Caco-2 (cell line): ENCODE measurements at regions of chr10 and their contacts with region 1.

Region 1: GRCh38 chr10:45464958-45465567 is 91.0 kb downstream of the ALOX5 start:
- DNase-seq: peak; percentile 75 to 88
- H3K4me3 ChIP-seq: no peak overlapping the region
- H3K4me3 Mint-ChIP-seq: no peak overlapping the region
- H3K27ac Mint-ChIP-seq: no peak overlapping the region
- H3K4me1 ChIP-seq: 0 out of 2 replicates have a peak, but pooled peaks cover under 1% of the 10 kb centered on the region
- H3K4me1 Mint-ChIP-seq: no peaks in the 10 kb centered on the region
- H3K27me3 ChIP-seq: no peaks in the 10 kb centered on the region
- H3K27me3 Mint-ChIP-seq: peaks cover 3% of the 10 kb centered on the region
- CTCF ChIP-seq: peak; percentile 98 to 99

Region 2: GRCh38 chr10:45008524-45009161 is 456.4 kb before region 1 on chr10:
- CTCF ChIA-PET with region 1: no interaction called
- POLR2A ChIA-PET with region 1: no interaction called
- intact Hi-C with region 1: loop called (anchors 10 kb)
- DNase-seq: peak in 1 of 2 experiments; percentile 83
- H3K4me3 ChIP-seq: no peak overlapping the region
- H3K4me3 Mint-ChIP-seq: no peak overlapping the region
- H3K27ac Mint-ChIP-seq: no peak overlapping the region
- H3K4me1 ChIP-seq: peaks cover 5% of the 10 kb centered on the region; the same call in 1 of the 2 replicates
- H3K4me1 Mint-ChIP-seq: peaks cover 2% of the 10 kb centered on the region
- H3K27me3 ChIP-seq: no peaks in the 10 kb centered on the region
- H3K27me3 Mint-ChIP-seq: no peaks in the 10 kb centered on the region
- CTCF ChIP-seq: peak; percentile 87 to 90

Region 3: GRCh38 chr10:45235798-45236231 is 229.2 kb before region 1 on chr10:
- CTCF ChIA-PET with region 1: interaction called, 3 read pairs
- POLR2A ChIA-PET with region 1: no interaction called
- intact Hi-C with region 1: loop called (anchors 5 kb)
- DNase-seq: no peak
- H3K4me3 ChIP-seq: no peak overlapping the region
- H3K4me3 Mint-ChIP-seq: no peak overlapping the region
- H3K27ac Mint-ChIP-seq: no peak overlapping the region
- H3K4me1 ChIP-seq: no peaks in the 10 kb centered on the region
- H3K4me1 Mint-ChIP-seq: no peaks in the 10 kb centered on the region
- H3K27me3 ChIP-seq: no peaks in the 10 kb centered on the region
- H3K27me3 Mint-ChIP-seq: peaks cover 11% of the 10 kb centered on the region
- CTCF ChIP-seq: no peak

Region 4: GRCh38 chr10:45453639-45454255 is 11.3 kb before region 1 on chr10:
- CTCF ChIA-PET with region 1: interaction called, 11 read pairs
- POLR2A ChIA-PET with region 1: no interaction called
- intact Hi-C with region 1: no loop called
- DNase-seq: no peak
- H3K4me3 ChIP-seq: no peak overlapping the region
- H3K4me3 Mint-ChIP-seq: no peak overlapping the region
- H3K27ac Mint-ChIP-seq: no peak overlapping the region
- H3K4me1 ChIP-seq: no peaks in the 10 kb centered on the region; the same call in 1 of the 2 replicates
- H3K4me1 Mint-ChIP-seq: no peaks in the 10 kb centered on the region
- H3K27me3 ChIP-seq: no peaks in the 10 kb centered on the region
- H3K27me3 Mint-ChIP-seq: no peaks in the 10 kb centered on the region
- CTCF ChIP-seq: no peak

Region 5: GRCh38 chr10:45476559-45476958 is 11.5 kb after region 1 on chr10:
- CTCF ChIA-PET with region 1: no interaction called
- POLR2A ChIA-PET with region 1: no interaction called
- intact Hi-C with region 1: no loop called
- DNase-seq: no peak
- H3K4me3 ChIP-seq: no peak overlapping the region
- H3K4me3 Mint-ChIP-seq: no peak overlapping the region
- H3K27ac Mint-ChIP-seq: no peak overlapping the region
- H3K4me1 ChIP-seq: no peaks in the 10 kb centered on the region
- H3K4me1 Mint-ChIP-seq: no peaks in the 10 kb centered on the region
- H3K27me3 ChIP-seq: no peaks in the 10 kb centered on the region
- H3K27me3 Mint-ChIP-seq: no peaks in the 10 kb centered on the region
- CTCF ChIP-seq: no peak

Region 6: GRCh38 chr10:45594276-45595106 is 129.4 kb after region 1 on chr10:
- CTCF ChIA-PET with region 1: interaction called, 3 read pairs
- POLR2A ChIA-PET with region 1: no interaction called
- intact Hi-C with region 1: loop called (anchors 1 kb)
- DNase-seq: peak; percentile 95 to 97
- H3K4me3 ChIP-seq: peak overlapping the region; percentile 89
- H3K4me3 Mint-ChIP-seq: peak overlapping the region; percentile 73
- H3K27ac Mint-ChIP-seq: peak overlapping the region; percentile 54
- H3K4me1 ChIP-seq: no peaks in the 10 kb centered on the region
- H3K4me1 Mint-ChIP-seq: peaks cover 14% of the 10 kb centered on the region
- H3K27me3 ChIP-seq: 0 out of 2 replicates have a peak, but pooled peaks cover 1% of the 10 kb centered on the region
- H3K27me3 Mint-ChIP-seq: peaks cover 5% of the 10 kb centered on the region
- CTCF ChIP-seq: no peak